ENCODE measurements at regions of chr2 and their contacts with region 1.

Region 1: GRCh38 chr2:196160101-196160500 is 11.3 kb downstream of the STK17B start:
- DNase-seq: peak; percentile 92
- ATAC-seq: peak; percentile 82
- H3K4me3 ChIP-seq: peak overlapping the region in 3 of 5 experiments; percentile 8 to 65 (median 13)
- H3K4me3 Mint-ChIP-seq: peak overlapping the region; percentile 56
- H3K27ac ChIP-seq: peak overlapping the region; percentile 47 to 96
- H3K27ac Mint-ChIP-seq: peak overlapping the region; percentile 82
- H3K4me1 ChIP-seq: peaks cover 56 to 93% of the 10 kb centered on the region in 2 donors
- H3K4me1 Mint-ChIP-seq: peaks cover 66% of the 10 kb centered on the region
- H3K27me3 ChIP-seq: no peaks in the 10 kb centered on the region
- H3K27me3 Mint-ChIP-seq: no peaks in the 10 kb centered on the region
- CTCF ChIP-seq: no peak

Region 2: DNA sequence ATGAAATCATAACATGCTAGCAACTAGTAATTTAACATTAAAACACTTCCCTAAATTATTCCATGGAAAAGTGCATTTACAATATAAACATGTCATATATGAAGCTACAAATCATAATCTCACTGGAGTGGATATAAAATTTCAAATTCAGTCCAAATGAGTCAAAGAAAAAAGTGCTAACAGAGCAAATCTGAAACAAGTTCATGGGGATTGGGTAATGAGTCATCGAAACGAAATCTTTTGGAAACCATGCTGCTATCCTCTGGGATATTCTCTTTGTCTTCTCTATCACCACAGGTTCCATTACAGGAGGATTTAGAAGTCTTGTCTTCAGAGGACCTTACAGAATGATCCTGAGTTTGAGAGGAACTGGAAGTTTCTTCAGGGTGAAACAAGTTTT is 22.8 kb before region 1 on chr2:
- CTCF ChIA-PET with region 1: no interaction called
- POLR2A ChIA-PET with region 1: interaction called, 19 read pairs
- intact Hi-C with region 1: no loop called
- DNase-seq: no peak
- ATAC-seq: no peak
- H3K4me3 ChIP-seq: no peak overlapping the region
- H3K4me3 Mint-ChIP-seq: no peak overlapping the region
- H3K27ac ChIP-seq: peak overlapping the region in 1 of 2 donors; percentile 59
- H3K27ac Mint-ChIP-seq: peak overlapping the region; percentile 5
- H3K4me1 ChIP-seq: no peaks in the 10 kb centered on the region
- H3K4me1 Mint-ChIP-seq: peaks cover 2% of the 10 kb centered on the region
- H3K27me3 ChIP-seq: no peaks in the 10 kb centered on the region
- H3K27me3 Mint-ChIP-seq: no peaks in the 10 kb centered on the region
- CTCF ChIP-seq: no peak

Region 3: DNA sequence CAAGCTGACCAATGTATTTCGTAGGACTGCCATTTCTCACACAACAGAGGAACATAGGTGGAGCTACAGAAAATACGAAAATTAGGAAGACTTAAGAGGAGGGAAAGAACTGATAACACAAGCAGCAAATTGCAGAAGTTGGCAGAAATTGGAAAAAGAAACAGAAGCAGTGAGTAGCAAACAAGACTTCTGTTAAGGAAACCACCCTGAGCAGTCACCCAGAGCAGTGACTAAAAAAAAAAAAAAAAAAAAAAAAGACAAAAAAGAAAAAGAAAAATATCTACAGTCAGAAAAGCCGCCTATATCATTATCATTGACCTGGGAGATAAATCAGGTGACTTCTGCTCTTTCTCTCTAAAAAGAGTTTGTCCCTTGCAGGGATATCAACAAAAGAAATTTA is 10.2 kb before region 1 on chr2:
- CTCF ChIA-PET with region 1: interaction called, 6 read pairs
- POLR2A ChIA-PET with region 1: interaction called, 3 read pairs
- intact Hi-C with region 1: loop called (anchors 1 kb)
- DNase-seq: peak; percentile 83
- ATAC-seq: peak; percentile 80
- H3K4me3 ChIP-seq: peak overlapping the region in 2 of 5 experiments; percentile 11 to 52
- H3K4me3 Mint-ChIP-seq: peak overlapping the region; percentile 86
- H3K27ac ChIP-seq: peak overlapping the region; percentile 71 to 90
- H3K27ac Mint-ChIP-seq: peak overlapping the region; percentile 97
- H3K4me1 ChIP-seq: peaks cover 37 to 55% of the 10 kb centered on the region in 2 donors
- H3K4me1 Mint-ChIP-seq: peaks cover 65% of the 10 kb centered on the region
- H3K27me3 ChIP-seq: no peaks in the 10 kb centered on the region
- H3K27me3 Mint-ChIP-seq: no peaks in the 10 kb centered on the region
- CTCF ChIP-seq: no peak

Region 4: DNA sequence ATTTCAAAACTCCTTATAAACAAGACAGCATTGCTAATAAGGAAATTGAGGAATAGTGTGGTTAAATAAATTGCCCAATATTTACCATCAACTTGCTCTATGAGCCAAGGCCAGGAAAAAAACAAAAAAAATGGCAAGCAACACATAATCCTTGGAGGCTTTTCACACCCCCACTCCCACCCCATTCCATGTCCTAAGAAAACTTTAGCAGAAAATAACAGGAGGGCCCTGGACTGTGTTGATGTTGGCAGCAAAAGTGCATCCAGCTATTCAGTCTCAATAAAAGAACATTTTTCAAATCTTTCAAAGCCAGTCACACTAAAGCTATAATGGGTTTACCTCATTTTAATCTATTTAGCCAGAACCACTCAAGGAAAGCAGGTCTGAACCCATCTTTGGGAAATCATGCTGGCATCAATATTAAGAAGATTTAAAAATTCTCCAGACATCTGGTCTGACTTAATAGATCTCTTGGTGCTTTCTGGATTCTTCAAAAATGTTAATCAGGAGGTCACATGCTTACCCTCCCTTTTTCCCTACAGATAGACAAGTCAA is 45.9 kb after region 1 on chr2:
- CTCF ChIA-PET with region 1: interaction called, 4 read pairs
- POLR2A ChIA-PET with region 1: no interaction called
- intact Hi-C with region 1: loop called (anchors 1 kb)
- DNase-seq: no peak
- ATAC-seq: no peak
- H3K4me3 ChIP-seq: no peak overlapping the region
- H3K4me3 Mint-ChIP-seq: no peak overlapping the region
- H3K27ac ChIP-seq: no peak overlapping the region
- H3K27ac Mint-ChIP-seq: no peak overlapping the region
- H3K4me1 ChIP-seq: peaks cover 18 to 20% of the 10 kb centered on the region in 2 donors
- H3K4me1 Mint-ChIP-seq: peaks cover 48% of the 10 kb centered on the region
- H3K27me3 ChIP-seq: no peaks in the 10 kb centered on the region
- H3K27me3 Mint-ChIP-seq: no peaks in the 10 kb centered on the region
- CTCF ChIP-seq: no peak

Region 5: GRCh38 chr2:197499594-197500526 is 1339.8 kb after region 1 on chr2 and contains the starts of genes HSPD1 and HSPE1:
- CTCF ChIA-PET with region 1: no interaction called
- POLR2A ChIA-PET with region 1: no interaction called
- intact Hi-C with region 1: no loop called
- DNase-seq: peak; percentile 100
- ATAC-seq: peak; percentile 84
- H3K4me3 ChIP-seq: peak within 1 kb of the TSS; percentile 60 to 86 (median 76)
- H3K4me3 Mint-ChIP-seq: peak within 1 kb of the TSS; percentile 98
- H3K27ac ChIP-seq: peak within 1 kb of the TSS; percentile 85 to 90
- H3K27ac Mint-ChIP-seq: peak within 1 kb of the TSS; percentile 94
- H3K4me1 ChIP-seq: peaks cover 37 to 38% of the 10 kb centered on the region in 2 donors
- H3K4me1 Mint-ChIP-seq: peaks cover 53% of the 10 kb centered on the region
- H3K27me3 ChIP-seq: no peaks in the 10 kb centered on the region
- H3K27me3 Mint-ChIP-seq: no peaks in the 10 kb centered on the region
- CTCF ChIP-seq: no peak
- total RNA-seq, gene HSPD1: 112 and 120 TPM in 2 replicates
- total RNA-seq, gene HSPE1: 37.9 and 46.2 TPM in 2 replicates

Measured in B cell (primary cell).